Prostate gland (tissue), 2 donors: ENCODE measurements at regions of chr7 and their contacts with region 1.

Region 1: DNA sequence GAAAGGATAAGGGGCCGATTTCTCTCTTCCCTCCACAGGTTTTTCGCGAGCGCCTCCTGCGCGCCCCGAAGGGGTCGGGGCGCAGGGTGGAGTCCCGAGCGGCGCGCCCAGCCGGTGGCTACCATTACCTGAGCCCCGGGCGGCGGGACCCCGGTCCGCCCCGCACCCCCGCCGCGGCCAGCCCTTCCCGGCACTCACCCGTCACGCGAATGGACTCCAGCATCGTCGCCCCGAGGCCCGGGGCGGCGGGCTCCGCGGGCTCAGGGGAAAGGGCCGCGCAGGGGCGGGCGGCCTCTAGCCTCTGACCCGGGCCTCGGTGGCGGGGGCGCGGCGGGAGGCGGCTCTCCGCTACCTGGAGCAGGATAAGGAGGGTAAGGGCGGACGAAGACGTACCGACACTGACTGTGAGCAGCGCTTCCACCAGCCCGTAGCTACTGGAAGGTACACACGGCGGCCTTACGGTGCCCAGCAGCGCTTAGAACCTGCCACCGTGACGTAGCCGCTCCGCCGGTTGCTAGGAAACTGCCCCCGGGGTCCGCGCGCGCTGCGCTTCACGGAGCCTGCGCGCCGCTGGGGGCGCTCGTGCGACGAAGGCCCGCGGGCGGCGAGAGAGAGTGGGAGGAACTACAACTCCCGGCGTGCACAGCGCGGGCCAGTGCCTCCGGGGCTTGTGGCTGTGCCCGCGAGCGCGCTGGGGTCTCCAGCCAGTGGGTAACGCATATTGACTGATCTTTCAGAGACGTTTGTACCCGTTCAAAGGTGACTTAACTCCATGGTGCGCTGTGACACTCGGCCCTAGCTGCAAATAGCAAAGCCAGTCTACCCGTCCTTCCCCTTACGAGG is 22.7 kb upstream of the ANLN start:
- DNase-seq: peak; percentile 85
- H3K4me3 ChIP-seq: peak overlapping the region; percentile 70 to 75
- H3K27ac ChIP-seq: peak overlapping the region; percentile 72 to 73
- H3K4me1 ChIP-seq: no peaks in the 10 kb centered on the region
- H3K27me3 ChIP-seq: no peaks in the 10 kb centered on the region
- CTCF ChIP-seq: peak; percentile 71 to 97 (median 94)
- POLR2A ChIP-seq: peak; percentile 41

Region 2: GRCh38 chr7:36244429-36244828 is 122.5 kb before region 1 on chr7:
- intact Hi-C with region 1: no loop called
- DNase-seq: no peak
- H3K4me3 ChIP-seq: no peak overlapping the region
- H3K27ac ChIP-seq: no peak overlapping the region
- H3K4me1 ChIP-seq: no peaks in the 10 kb centered on the region
- H3K27me3 ChIP-seq: no peaks in the 10 kb centered on the region
- CTCF ChIP-seq: no peak
- POLR2A ChIP-seq: no peak

Region 3: GRCh38 chr7:36389371-36390198 is 22.6 kb after region 1 on chr7 and contains the start of gene ANLN:
- intact Hi-C with region 1: loop called (anchors 2 kb)
- DNase-seq: peak; percentile 90
- H3K4me3 ChIP-seq: peak within 1 kb of the TSS; percentile 46 to 58
- H3K27ac ChIP-seq: peak within 1 kb of the TSS; percentile 69 to 75
- H3K4me1 ChIP-seq: no peaks in the 10 kb centered on the region
- H3K27me3 ChIP-seq: no peaks in the 10 kb centered on the region
- CTCF ChIP-seq: peak in 2 of 4 experiments; percentile 7 to 13
- POLR2A ChIP-seq: peak; percentile 23
- total RNA-seq, gene ANLN: 9.9 to 13.6 TPM